CD4-positive, alpha-beta T cell (primary cell): ENCODE measurements at regions of chr7 and their contacts with region 1.

Region 1: DNA sequence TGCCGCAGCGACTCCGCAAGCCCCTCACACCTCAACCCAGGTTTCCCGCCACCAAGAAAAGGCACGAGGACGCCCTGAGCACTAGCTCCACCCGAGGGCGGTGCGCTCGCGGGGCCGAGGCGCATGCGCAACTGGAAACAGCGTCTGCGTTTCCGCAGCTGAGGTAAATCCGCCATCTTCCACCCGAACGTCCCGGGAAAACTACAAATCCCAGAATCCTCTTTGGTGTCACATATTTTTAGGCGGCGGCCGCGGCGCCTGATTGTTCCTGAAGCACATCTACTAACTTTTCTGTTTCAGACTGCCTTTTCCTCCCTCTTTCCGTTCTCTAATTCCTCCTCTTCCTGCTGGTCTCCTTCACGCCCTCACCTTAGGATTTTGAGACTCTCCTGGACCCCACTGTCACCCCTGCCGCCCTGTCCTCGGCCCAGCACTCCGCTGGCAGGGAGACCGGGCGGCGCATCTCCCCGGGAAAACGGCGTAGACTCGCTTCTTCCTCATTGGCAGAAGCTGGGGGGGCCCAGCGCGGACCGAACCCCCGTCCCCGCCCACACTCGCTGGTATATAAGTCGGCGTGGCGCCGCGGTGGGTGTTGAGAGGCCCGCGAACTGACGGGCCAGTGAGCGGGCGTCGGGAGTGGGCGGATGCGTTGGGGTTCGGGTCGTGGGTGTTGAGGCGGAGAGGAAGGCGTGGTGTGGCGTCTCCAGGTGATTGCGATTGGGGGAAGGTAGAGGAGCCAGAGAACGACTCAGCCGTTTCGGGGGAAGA is at the start of gene ZCWPW1:
- DNase-seq: peak; percentile 94 to 99 (median 97)
- ATAC-seq: peak; percentile 61
- H3K4me3 ChIP-seq: peak within 1 kb of the TSS; percentile 96
- H3K4me3 Mint-ChIP-seq: peak within 1 kb of the TSS; percentile 100
- H3K27ac ChIP-seq: peak within 1 kb of the TSS; percentile 100
- H3K27ac Mint-ChIP-seq: peak within 1 kb of the TSS; percentile 100
- H3K4me1 ChIP-seq: peaks cover 49% of the 10 kb centered on the region
- H3K4me1 Mint-ChIP-seq: peaks cover 40% of the 10 kb centered on the region
- H3K27me3 ChIP-seq: no peaks in the 10 kb centered on the region
- H3K27me3 Mint-ChIP-seq: peaks cover 11% of the 10 kb centered on the region
- CTCF ChIP-seq: no peak
- total RNA-seq, gene ZCWPW1: 4.4 to 6.5 TPM

Region 2: GRCh38 chr7:100119062-100119700 is 309.2 kb before region 1 on chr7 and contains the starts of genes CNPY4 and TAF6:
- CTCF ChIA-PET with region 1: no interaction called
- POLR2A ChIA-PET with region 1: interaction called, 11 read pairs
- intact Hi-C with region 1: no loop called
- DNase-seq: peak; percentile 90 to 98 (median 96)
- ATAC-seq: peak; percentile 70
- H3K4me3 ChIP-seq: peak within 1 kb of the TSS; percentile 93
- H3K4me3 Mint-ChIP-seq: peak within 1 kb of the TSS; percentile 98
- H3K27ac ChIP-seq: peak within 1 kb of the TSS; percentile 79 to 98
- H3K27ac Mint-ChIP-seq: peak within 1 kb of the TSS; percentile 97
- H3K4me1 ChIP-seq: peaks cover 31% of the 10 kb centered on the region
- H3K4me1 Mint-ChIP-seq: peaks cover 24% of the 10 kb centered on the region
- H3K27me3 ChIP-seq: no peaks in the 10 kb centered on the region
- H3K27me3 Mint-ChIP-seq: no peaks in the 10 kb centered on the region
- CTCF ChIP-seq: no peak
- total RNA-seq, gene CNPY4: 22.5 to 25.6 TPM
- total RNA-seq, gene TAF6: 34.8 to 37.4 TPM

Region 3: DNA sequence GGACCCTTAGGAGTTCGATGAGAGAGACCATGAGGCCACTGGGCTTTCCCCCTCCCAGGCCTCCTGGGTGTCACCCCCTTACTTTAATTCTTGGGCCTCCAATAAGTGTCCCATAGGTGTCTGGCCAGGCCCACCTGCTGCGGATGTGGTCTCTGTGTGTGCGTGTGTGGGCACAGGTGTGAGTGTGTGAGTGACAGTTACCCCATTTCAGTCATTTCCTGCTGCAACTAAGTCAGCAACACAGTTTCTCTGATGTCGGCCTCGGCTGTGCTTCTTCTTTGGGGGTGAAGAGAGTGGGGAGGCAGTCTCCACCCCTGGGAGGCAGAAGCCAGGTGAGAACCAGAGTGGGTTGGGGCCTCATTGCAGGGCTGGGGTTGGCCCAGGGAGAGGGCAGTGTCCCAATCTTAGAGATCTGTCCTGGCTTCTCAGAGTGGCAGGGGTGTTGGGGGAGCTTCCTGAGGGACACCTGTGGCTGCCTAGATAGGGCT is 207.1 kb before region 1 on chr7:
- CTCF ChIA-PET with region 1: no interaction called
- POLR2A ChIA-PET with region 1: interaction called, 17 read pairs
- intact Hi-C with region 1: loop called in 1 of 2 experiments (anchors 5 kb)
- DNase-seq: peak; percentile 62 to 95 (median 78)
- ATAC-seq: peak; percentile 69
- H3K4me3 ChIP-seq: peak overlapping the region; percentile 89
- H3K4me3 Mint-ChIP-seq: peak overlapping the region; percentile 95
- H3K27ac ChIP-seq: peak overlapping the region; percentile 98 to 99
- H3K27ac Mint-ChIP-seq: peak overlapping the region; percentile 98
- H3K4me1 ChIP-seq: peaks cover 85% of the 10 kb centered on the region
- H3K4me1 Mint-ChIP-seq: peaks cover 72% of the 10 kb centered on the region
- H3K27me3 ChIP-seq: no peaks in the 10 kb centered on the region
- H3K27me3 Mint-ChIP-seq: no peaks in the 10 kb centered on the region
- CTCF ChIP-seq: no peak

Region 4: GRCh38 chr7:100369105-100369504 is 59.3 kb before region 1 on chr7:
- CTCF ChIA-PET with region 1: no interaction called
- POLR2A ChIA-PET with region 1: no interaction called
- intact Hi-C with region 1: no loop called
- DNase-seq: peak in 4 of 14 experiments; percentile 13 to 80 (median 60)
- ATAC-seq: peak; percentile 25
- H3K4me3 ChIP-seq: no peak overlapping the region
- H3K4me3 Mint-ChIP-seq: no peak overlapping the region
- H3K27ac ChIP-seq: peak overlapping the region in 1 of 2 donors; percentile 48
- H3K27ac Mint-ChIP-seq: peak overlapping the region; percentile 30
- H3K4me1 ChIP-seq: peaks cover 32% of the 10 kb centered on the region
- H3K4me1 Mint-ChIP-seq: peaks cover 20% of the 10 kb centered on the region
- H3K27me3 ChIP-seq: no peaks in the 10 kb centered on the region
- H3K27me3 Mint-ChIP-seq: no peaks in the 10 kb centered on the region
- CTCF ChIP-seq: no peak

Region 5: GRCh38 chr7:100455206-100455605 is 26.8 kb after region 1 on chr7:
- CTCF ChIA-PET with region 1: no interaction called
- POLR2A ChIA-PET with region 1: interaction called, 18 read pairs
- intact Hi-C with region 1: no loop called
- DNase-seq: no peak
- ATAC-seq: no peak
- H3K4me3 ChIP-seq: no peak overlapping the region
- H3K4me3 Mint-ChIP-seq: peak overlapping the region; percentile 38
- H3K27ac ChIP-seq: no peak overlapping the region
- H3K27ac Mint-ChIP-seq: peak overlapping the region; percentile 85
- H3K4me1 ChIP-seq: peaks cover 23% of the 10 kb centered on the region
- H3K4me1 Mint-ChIP-seq: peaks cover 23% of the 10 kb centered on the region
- H3K27me3 ChIP-seq: no peaks in the 10 kb centered on the region
- H3K27me3 Mint-ChIP-seq: no peaks in the 10 kb centered on the region
- CTCF ChIP-seq: no peak

Region 6: GRCh38 chr7:100611974-100612729 is 183.8 kb after region 1 on chr7 and contains the start of gene MOSPD3:
- CTCF ChIA-PET with region 1: no interaction called
- POLR2A ChIA-PET with region 1: interaction called, 40 read pairs
- intact Hi-C with region 1: no loop called
- DNase-seq: peak; percentile 95 to 99 (median 98)
- ATAC-seq: peak; percentile 87
- H3K4me3 ChIP-seq: peak within 1 kb of the TSS; percentile 62
- H3K4me3 Mint-ChIP-seq: peak within 1 kb of the TSS; percentile 94
- H3K27ac ChIP-seq: peak within 1 kb of the TSS; percentile 78 to 92
- H3K27ac Mint-ChIP-seq: peak within 1 kb of the TSS; percentile 97
- H3K4me1 ChIP-seq: peaks cover 27% of the 10 kb centered on the region
- H3K4me1 Mint-ChIP-seq: peaks cover 31% of the 10 kb centered on the region
- H3K27me3 ChIP-seq: no peaks in the 10 kb centered on the region
- H3K27me3 Mint-ChIP-seq: no peaks in the 10 kb centered on the region
- CTCF ChIP-seq: no peak
- total RNA-seq, gene MOSPD3: 8.5 to 10.9 TPM